ENCODE measurements at regions of chr1 and their contacts with region 1.

Region 1: DNA sequence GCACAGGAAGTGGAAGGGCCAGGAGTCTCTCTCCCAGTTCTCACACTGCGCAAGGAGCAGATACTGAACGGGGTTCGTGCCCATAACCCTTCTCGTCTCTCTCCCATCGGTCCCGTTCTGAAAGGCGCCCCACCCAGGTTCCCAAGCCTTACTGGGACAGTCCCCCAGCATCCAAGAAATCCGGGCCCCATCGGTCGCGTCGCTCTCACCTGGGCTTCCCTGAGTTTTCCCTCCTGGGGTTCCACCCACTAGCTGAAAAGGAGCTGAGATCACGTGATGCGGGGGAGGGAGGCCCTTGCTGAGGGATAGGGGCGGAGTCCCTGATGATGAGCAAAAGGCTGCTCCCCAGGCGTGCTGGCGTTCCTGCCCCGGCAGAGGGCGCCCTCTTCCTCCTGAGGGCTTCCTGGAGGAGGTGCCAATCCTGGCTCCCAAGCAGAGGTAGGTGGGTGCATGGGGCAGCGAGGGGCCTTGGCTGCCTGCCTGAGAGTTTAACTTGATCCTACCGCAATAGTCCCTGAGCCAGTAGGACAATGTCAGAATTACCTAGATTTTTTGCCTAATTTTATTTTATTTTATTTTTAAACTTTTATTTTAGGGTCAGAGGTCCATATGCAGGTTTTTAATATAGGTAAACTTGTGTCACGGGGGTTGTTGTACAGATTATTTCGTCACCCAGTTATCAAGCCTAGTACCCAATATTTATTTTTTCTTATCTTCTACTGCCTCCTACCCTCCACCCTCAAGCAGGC is at the start of gene SPOCD1:
- DNase-seq: peak; percentile 71 to 86 (median 78)
- ATAC-seq: peak; percentile 98
- H3K4me3 ChIP-seq: no peak within 1 kb of the TSS
- H3K4me3 Mint-ChIP-seq: peak within 1 kb of the TSS in 2 of 10 donors; percentile 18 to 41
- H3K27ac ChIP-seq: no peak within 1 kb of the TSS
- H3K27ac Mint-ChIP-seq: peak within 1 kb of the TSS; percentile 33 to 81 (median 48)
- H3K4me1 ChIP-seq: peaks cover 0 to 7% of the 10 kb centered on the region in 2 donors
- H3K4me1 Mint-ChIP-seq: peaks cover 6 to 24% (median 13%) of the 10 kb centered on the region in 7 donors
- H3K27me3 ChIP-seq: no peaks in the 10 kb centered on the region
- H3K27me3 Mint-ChIP-seq: no peaks in the 10 kb centered on the region
- total RNA-seq, gene SPOCD1: 0.21 to 0.38 TPM in 2 of 5 experiments, not detected in the others

Region 2: GRCh38 chr1:31203215-31203614 is 612.7 kb before region 1 on chr1:
- CTCF ChIA-PET with region 1: no interaction called
- POLR2A ChIA-PET with region 1: no interaction called
- intact Hi-C with region 1: no loop called
- DNase-seq: no peak
- ATAC-seq: no peak
- H3K4me3 ChIP-seq: no peak overlapping the region
- H3K4me3 Mint-ChIP-seq: no peak overlapping the region
- H3K27ac ChIP-seq: no peak overlapping the region
- H3K27ac Mint-ChIP-seq: no peak overlapping the region
- H3K4me1 ChIP-seq: no peaks in the 10 kb centered on the region
- H3K4me1 Mint-ChIP-seq: no peaks in the 10 kb centered on the region
- H3K27me3 ChIP-seq: no peaks in the 10 kb centered on the region
- H3K27me3 Mint-ChIP-seq: peaks cover 0 to 6% (median 3%) of the 10 kb centered on the region in 5 donors

Region 3: GRCh38 chr1:31760471-31761470 is 55.2 kb before region 1 on chr1:
- CTCF ChIA-PET with region 1: no interaction called
- POLR2A ChIA-PET with region 1: no interaction called
- intact Hi-C with region 1: no loop called
- DNase-seq: peak; percentile 37 to 71 (median 60)
- ATAC-seq: peak; percentile 73
- H3K4me3 ChIP-seq: peak overlapping the region; percentile 71
- H3K4me3 Mint-ChIP-seq: peak overlapping the region; percentile 61 to 89 (median 72)
- H3K27ac ChIP-seq: no peak overlapping the region
- H3K27ac Mint-ChIP-seq: peak overlapping the region in 5 of 9 donors; percentile 10 to 59 (median 32)
- H3K4me1 ChIP-seq: peaks cover 23 to 32% of the 10 kb centered on the region in 2 donors
- H3K4me1 Mint-ChIP-seq: peaks cover 6 to 32% (median 26%) of the 10 kb centered on the region in 7 donors
- H3K27me3 ChIP-seq: no peaks in the 10 kb centered on the region
- H3K27me3 Mint-ChIP-seq: peaks cover 0 to 64% (median 4%) of the 10 kb centered on the region in 5 donors

Region 4: DNA sequence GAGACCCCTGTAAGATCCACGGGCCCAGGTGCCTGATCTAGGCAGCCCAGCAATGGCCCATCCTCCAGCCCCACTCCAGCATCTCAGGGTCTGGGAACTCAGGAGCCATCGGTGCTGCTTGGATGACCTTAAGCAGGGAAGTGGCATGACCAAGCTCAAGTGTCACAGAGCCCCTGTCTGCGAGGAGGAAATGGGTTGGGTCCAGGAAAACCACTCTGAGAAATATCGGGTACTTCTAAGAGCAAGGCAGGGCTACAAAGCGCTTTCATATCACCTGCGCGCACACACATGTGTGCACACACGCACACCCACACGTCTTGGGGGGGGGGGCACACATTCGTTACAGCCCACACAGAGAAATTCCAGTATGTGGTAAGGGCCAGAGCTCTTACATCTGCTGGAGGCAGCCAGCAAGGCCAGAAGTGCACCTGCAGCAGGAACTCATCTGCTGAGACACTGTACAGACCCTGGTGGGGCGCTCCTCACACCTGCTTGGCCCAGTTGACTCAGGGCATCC is 32.5 kb after region 1 on chr1:
- CTCF ChIA-PET with region 1: interaction called, 3 read pairs
- POLR2A ChIA-PET with region 1: interaction called, 5 read pairs
- intact Hi-C with region 1: loop called in 1 of 2 experiments (anchors 1 kb)
- DNase-seq: peak in 8 of 9 donors; percentile 37 to 69 (median 59)
- ATAC-seq: peak; percentile 89
- H3K4me3 ChIP-seq: peak overlapping the region; percentile 50
- H3K4me3 Mint-ChIP-seq: peak overlapping the region; percentile 58 to 97 (median 76)
- H3K27ac ChIP-seq: peak overlapping the region; percentile 69
- H3K27ac Mint-ChIP-seq: peak overlapping the region; percentile 66 to 98 (median 90)
- H3K4me1 ChIP-seq: peaks cover 18 to 48% of the 10 kb centered on the region in 2 donors
- H3K4me1 Mint-ChIP-seq: peaks cover 48 to 77% (median 64%) of the 10 kb centered on the region in 7 donors
- H3K27me3 ChIP-seq: no peaks in the 10 kb centered on the region
- H3K27me3 Mint-ChIP-seq: no peaks in the 10 kb centered on the region

Region 5: DNA sequence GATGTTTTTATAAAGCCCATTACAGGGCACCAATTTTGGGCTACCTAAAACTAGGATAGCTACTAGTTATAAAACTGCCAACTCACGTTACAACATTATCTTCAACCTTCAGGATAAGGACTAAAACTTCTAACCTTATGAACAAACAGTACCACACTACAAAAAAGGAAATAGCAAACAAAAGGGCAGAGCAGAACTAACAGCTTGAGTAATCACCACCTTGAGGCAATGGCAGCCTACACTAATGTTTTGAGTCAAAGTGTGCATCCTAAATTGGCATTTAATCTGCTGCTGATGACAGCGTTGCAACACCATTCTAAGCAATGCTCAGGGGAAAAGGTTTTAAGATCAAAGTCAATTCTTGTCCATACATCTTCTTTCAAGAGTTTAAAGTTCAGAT is 95.0 kb after region 1 on chr1:
- CTCF ChIA-PET with region 1: interaction called, 3 read pairs
- POLR2A ChIA-PET with region 1: no interaction called
- intact Hi-C with region 1: loop called in 1 of 2 experiments (anchors 5 kb)
- DNase-seq: no peak
- ATAC-seq: peak; percentile 41
- H3K4me3 ChIP-seq: no peak overlapping the region
- H3K4me3 Mint-ChIP-seq: peak overlapping the region in 5 of 10 donors; percentile 1 to 43 (median 20)
- H3K27ac ChIP-seq: no peak overlapping the region
- H3K27ac Mint-ChIP-seq: peak overlapping the region; percentile 19 to 78 (median 61)
- H3K4me1 ChIP-seq: peaks cover 27 to 40% of the 10 kb centered on the region in 2 donors
- H3K4me1 Mint-ChIP-seq: peaks cover 34 to 61% (median 58%) of the 10 kb centered on the region in 7 donors
- H3K27me3 ChIP-seq: no peaks in the 10 kb centered on the region
- H3K27me3 Mint-ChIP-seq: no peaks in the 10 kb centered on the region

Region 6: DNA sequence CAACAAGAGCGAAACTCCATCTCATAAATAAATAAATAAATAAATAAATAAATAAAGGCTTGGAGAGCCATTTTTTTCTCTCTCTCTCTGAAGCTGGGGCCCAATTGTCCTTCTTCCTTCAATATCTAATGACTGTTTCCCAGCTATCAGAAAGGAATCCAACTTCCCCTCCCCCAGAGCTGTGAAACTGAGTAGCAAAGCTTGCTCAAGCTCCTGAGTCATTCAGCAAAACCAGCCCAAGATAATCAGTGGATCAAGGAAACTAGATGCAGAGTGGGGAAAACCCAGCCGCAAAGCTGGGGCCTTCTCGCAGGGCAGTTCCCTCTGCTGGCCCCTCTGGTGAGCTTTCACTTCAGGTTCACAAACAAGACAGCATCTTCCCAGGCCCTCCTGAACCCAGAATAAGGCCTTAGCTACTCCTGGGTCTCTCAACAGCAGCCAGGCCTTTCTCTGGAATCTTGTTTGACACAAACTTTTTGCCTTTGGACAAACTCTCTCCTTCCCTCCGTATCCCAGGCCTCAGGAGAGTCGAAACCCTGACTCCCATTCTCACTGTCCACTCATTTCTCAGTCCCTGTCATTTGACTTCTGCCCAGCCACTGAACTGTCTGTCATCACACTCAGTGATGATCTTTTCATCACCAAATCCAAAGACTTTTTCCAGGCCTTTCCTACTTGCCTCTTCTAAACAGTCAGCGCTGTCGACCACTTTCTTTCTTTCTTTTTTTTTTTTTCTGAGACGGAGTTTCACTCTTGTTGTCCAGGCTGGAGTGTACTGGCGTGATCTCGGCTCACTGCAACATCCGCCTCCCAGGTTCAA is 140.2 kb after region 1 on chr1:
- CTCF ChIA-PET with region 1: interaction called, 33 read pairs
- POLR2A ChIA-PET with region 1: interaction called, 5 read pairs
- intact Hi-C with region 1: loop called in 1 of 2 experiments (anchors 2 kb)
- DNase-seq: peak in 7 of 9 donors; percentile 31 to 79 (median 51)
- ATAC-seq: peak; percentile 93
- H3K4me3 ChIP-seq: no peak overlapping the region
- H3K4me3 Mint-ChIP-seq: peak overlapping the region; percentile 10 to 79 (median 59)
- H3K27ac ChIP-seq: peak overlapping the region; percentile 8
- H3K27ac Mint-ChIP-seq: peak overlapping the region; percentile 15 to 91 (median 83)
- H3K4me1 ChIP-seq: peaks cover 31 to 42% of the 10 kb centered on the region in 2 donors
- H3K4me1 Mint-ChIP-seq: peaks cover 45 to 76% (median 73%) of the 10 kb centered on the region in 7 donors
- H3K27me3 ChIP-seq: no peaks in the 10 kb centered on the region
- H3K27me3 Mint-ChIP-seq: no peaks in the 10 kb centered on the region

Region 7: DNA sequence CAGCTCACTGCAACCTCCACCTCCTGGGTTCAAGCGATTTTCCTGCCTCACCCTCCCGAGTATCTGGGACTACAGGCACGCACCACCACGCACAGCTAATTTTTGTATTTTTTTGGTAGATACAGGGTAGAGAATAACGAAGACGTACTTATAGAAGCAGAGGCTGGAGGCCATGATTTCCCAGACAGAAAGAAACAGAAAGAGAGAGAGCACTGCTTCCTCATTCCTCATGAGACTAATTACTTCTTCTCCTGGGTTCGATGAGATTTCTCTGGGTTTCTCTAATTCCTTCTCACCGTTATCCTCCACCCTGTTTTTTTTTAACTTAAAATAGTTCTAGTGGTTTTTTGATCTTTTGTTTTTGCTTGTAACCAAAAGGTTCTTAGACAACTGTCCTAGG is 145.6 kb after region 1 on chr1:
- CTCF ChIA-PET with region 1: interaction called, 33 read pairs
- POLR2A ChIA-PET with region 1: interaction called, 5 read pairs
- intact Hi-C with region 1: loop called (anchors 1 kb)
- DNase-seq: no peak
- ATAC-seq: no peak
- H3K4me3 ChIP-seq: no peak overlapping the region
- H3K4me3 Mint-ChIP-seq: peak overlapping the region; percentile 5 to 74 (median 56)
- H3K27ac ChIP-seq: no peak overlapping the region
- H3K27ac Mint-ChIP-seq: peak overlapping the region; percentile 44 to 94 (median 77)
- H3K4me1 ChIP-seq: peaks cover 8 to 34% of the 10 kb centered on the region in 2 donors
- H3K4me1 Mint-ChIP-seq: peaks cover 38 to 65% (median 61%) of the 10 kb centered on the region in 7 donors
- H3K27me3 ChIP-seq: no peaks in the 10 kb centered on the region
- H3K27me3 Mint-ChIP-seq: no peaks in the 10 kb centered on the region

Region 8: DNA sequence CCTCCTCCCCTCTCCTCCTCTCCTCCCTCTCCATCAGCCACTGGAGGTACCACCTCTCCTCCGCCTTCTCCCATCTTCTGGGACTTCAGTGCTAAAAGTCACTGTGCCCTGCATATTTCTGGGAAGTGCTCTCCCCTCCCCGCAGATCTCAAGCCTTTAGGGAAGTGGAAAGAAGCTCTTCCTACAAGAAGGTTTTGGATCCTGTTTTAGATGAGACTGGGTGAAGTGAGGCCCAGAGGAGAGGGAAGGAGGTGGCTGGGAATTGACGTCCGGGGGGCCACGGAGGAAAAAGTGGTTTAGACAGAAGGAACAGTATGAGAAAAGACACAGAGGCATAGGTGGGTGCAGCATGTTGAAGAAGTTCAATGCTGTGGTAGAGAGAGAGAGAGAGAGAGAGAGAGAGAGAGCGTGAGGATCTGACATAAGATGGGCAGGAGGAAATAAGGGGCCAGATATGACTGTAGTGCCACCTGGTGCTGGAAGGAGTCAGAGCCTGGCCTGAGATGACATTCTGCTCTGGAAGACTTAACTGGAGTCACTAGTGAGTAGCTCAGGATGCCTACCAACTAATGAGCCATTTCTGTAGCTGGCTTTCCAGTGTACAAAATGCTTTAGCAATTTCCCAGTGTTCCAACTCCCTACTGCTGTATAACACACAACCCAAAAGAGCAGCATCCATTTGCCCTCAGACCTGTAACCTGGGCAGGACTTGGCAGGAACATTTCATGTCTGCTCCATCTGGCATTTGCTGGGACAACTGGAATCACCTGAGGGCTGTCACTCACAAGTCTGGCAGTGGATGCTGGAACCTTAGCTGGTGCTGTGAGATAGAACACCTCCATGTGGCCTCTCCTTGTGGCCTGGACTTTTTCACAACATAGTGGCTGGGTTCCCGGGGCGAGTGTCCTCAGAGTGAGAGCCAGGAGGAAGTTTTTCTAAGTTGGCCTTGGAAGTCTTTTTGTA is 1639.9 kb after region 1 on chr1:
- CTCF ChIA-PET with region 1: no interaction called
- POLR2A ChIA-PET with region 1: no interaction called
- intact Hi-C with region 1: no loop called
- DNase-seq: peak in 6 of 9 donors; percentile 19 to 44 (median 26)
- ATAC-seq: peak; percentile 89
- H3K4me3 ChIP-seq: no peak overlapping the region
- H3K4me3 Mint-ChIP-seq: no peak overlapping the region
- H3K27ac ChIP-seq: no peak overlapping the region
- H3K27ac Mint-ChIP-seq: peak overlapping the region in 3 of 9 donors; percentile 8 to 39 (median 33)
- H3K4me1 ChIP-seq: no peaks in the 10 kb centered on the region
- H3K4me1 Mint-ChIP-seq: peaks cover 0 to 5% (median 0%) of the 10 kb centered on the region in 7 donors
- H3K27me3 ChIP-seq: no peaks in the 10 kb centered on the region
- H3K27me3 Mint-ChIP-seq: peaks cover 0 to 25% (median 9%) of the 10 kb centered on the region in 5 donors